GM12878 (cell line): ENCODE measurements at regions of chr3 and their contacts with region 1.

Region 1: DNA sequence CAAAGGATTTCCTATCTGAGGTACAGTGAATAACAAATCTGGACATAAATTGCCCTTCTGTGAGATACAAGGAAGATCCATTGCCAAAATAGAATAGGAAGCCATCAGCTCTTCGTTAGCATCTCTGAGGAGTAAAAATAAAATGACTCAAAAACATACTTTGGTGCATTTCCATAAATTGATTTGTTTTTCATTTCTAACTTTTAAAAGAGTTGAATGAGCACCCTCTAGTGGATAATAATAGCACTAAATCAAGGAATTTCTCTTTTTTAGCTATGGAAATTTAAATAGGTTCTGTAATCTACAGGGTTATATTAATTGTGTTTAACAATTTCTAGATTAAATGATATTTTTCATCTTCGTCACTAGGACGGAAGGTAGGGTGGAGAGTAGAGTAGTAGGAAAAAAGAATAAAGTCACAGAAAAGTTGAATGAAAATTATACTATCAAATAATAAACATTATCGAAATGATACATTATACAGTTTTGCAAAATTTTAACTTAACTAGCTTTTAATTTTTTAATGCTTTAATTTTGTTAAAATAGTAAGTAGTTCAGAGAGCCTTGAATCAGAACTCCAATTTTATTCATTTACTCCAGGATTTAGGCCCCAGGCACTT is 6.4 kb downstream of the NSUN3 start:
- DNase-seq: no peak
- ATAC-seq: no peak
- H3K4me3 ChIP-seq: no peak overlapping the region
- H3K27ac ChIP-seq: peak overlapping the region; percentile 90; the same call in 1 of the 2 replicates
- H3K4me1 ChIP-seq: peaks cover 30% of the 10 kb centered on the region
- H3K27me3 ChIP-seq: no peaks in the 10 kb centered on the region
- CTCF ChIP-seq: peak in 2 of 3 experiments; percentile 18 to 34; a peak in 4 of 6 replicates
- EP300 ChIP-seq: no peak
- POLR2A ChIP-seq: no peak
- RAD21 ChIP-seq: peak; percentile 23; the same call in 1 of the 2 replicates

Region 2: DNA sequence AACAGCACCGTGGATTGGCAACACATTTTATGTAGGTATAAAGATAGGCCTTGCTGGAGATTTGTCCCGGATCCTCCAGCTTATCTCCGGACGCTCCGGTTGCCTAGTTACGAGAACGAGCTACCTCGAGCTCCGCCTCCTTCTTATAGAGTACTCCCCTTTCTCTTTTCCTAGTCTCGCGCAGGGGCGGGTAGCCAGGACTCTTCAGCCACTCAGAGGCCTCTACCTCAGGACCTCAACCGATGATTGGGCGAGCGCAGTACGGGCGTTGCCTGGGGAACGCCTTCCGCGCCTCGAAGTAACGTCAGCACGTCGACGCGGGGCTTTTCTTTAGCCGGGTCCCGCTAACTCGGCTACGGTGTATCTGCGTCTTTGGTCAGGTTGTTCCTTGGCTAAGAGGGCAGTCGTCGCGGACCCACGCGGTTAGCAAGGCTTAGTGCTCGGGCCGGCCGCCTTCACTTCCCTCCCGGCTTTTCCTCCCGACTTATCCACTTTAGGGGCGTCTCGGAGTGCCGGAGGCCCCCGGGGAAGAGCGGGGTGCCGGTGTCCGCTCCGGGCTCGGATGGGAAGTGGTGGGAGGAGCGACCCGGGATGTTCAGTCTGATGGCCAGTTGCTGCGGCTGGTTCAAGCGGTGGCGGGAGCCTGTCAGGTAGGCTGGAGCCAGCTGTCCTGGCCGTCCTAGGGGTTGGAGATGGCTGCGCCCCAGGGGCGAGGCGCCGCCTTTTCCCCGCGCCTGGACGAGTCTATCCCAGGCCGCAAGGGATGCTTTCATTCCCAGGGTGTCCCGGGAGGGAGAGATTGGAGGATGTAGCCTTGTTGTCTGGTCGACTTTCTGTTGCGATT is 89.2 kb before region 1 on chr3 and contains the start of gene ARL13B:
- CTCF ChIA-PET with region 1: interaction called, 12 read pairs
- POLR2A ChIA-PET with region 1: no interaction called
- RAD21 ChIA-PET with region 1: interaction called, 4 read pairs
- SMC1A ChIA-PET with region 1: interaction called, 6 read pairs
- in situ Hi-C with region 1: no loop called
- intact Hi-C with region 1: no loop called
- DNase-seq: peak; percentile 90
- ATAC-seq: peak; percentile 100
- H3K4me3 ChIP-seq: peak within 1 kb of the TSS; percentile 82
- H3K27ac ChIP-seq: peak within 1 kb of the TSS; percentile 67
- H3K4me1 ChIP-seq: no peaks in the 10 kb centered on the region
- H3K27me3 ChIP-seq: no peaks in the 10 kb centered on the region
- CTCF ChIP-seq: no peak
- EP300 ChIP-seq: no peak
- POLR2A ChIP-seq: peak; percentile 88
- RAD21 ChIP-seq: no peak
- polyA plus RNA-seq, gene ARL13B: 3.0 to 4.5 TPM

Region 3: DNA sequence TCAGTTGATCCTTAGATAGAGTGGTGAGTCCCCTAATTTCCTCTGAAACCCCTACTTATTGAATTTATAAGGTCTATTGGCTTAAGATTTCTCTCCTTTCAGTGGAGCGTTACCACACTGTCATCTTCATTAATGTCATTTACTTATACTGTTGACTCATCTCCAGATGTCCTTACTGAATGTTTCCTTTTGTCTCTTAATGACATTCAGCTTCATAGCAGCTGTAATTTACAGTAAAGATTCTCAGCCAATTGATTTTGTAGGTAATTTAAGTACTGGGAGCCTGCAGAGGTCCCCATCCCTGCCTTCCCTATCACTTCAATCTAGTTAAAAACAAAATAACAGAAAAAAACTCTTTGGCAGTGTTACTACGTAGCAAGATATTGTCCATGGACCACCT is 59.7 kb before region 1 on chr3:
- CTCF ChIA-PET with region 1: interaction called, 164 read pairs
- POLR2A ChIA-PET with region 1: interaction called, 4 read pairs
- RAD21 ChIA-PET with region 1: interaction called, 21 read pairs
- SMC1A ChIA-PET with region 1: interaction called, 38 read pairs
- in situ Hi-C with region 1: loop called (anchors 5 kb)
- intact Hi-C with region 1: loop called (anchors 1 kb)
- DNase-seq: no peak
- ATAC-seq: no peak
- H3K4me3 ChIP-seq: no peak overlapping the region
- H3K27ac ChIP-seq: no peak overlapping the region
- H3K4me1 ChIP-seq: no peaks in the 10 kb centered on the region
- H3K27me3 ChIP-seq: no peaks in the 10 kb centered on the region
- CTCF ChIP-seq: no peak
- EP300 ChIP-seq: no peak
- POLR2A ChIP-seq: no peak
- RAD21 ChIP-seq: no peak

Region 4: DNA sequence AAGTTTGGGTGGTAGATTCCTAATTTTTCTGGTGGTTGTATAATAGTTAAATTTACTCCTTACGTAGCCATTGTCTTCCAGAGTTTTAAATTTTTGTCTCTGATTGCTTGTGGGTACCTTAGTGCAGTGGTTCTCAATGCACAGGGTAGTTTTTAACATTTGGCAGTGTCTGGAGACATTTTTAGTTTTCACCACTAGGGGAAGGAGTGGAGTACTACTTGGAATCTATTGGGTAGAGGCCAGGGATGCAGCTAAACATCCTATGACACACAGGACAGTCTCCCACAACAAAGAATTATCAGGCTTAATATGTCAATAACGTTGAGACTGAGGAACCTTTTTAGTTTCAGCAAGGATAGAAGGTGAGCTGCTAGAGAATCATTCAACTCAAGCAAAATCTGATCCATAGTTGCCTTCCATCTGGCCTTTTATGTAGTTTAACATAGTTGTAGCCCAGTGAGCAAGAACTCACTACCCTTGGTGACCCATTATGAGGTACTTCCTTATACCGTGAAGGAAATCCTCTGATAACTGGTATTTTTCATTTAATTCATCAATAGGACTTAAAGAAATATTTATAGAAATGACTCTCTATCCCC is 32.3 kb before region 1 on chr3:
- CTCF ChIA-PET with region 1: interaction called, 31 read pairs
- POLR2A ChIA-PET with region 1: no interaction called
- RAD21 ChIA-PET with region 1: interaction called, 12 read pairs
- SMC1A ChIA-PET with region 1: interaction called, 4 read pairs
- in situ Hi-C with region 1: no loop called
- intact Hi-C with region 1: no loop called
- DNase-seq: no peak
- ATAC-seq: peak; percentile 92
- H3K4me3 ChIP-seq: no peak overlapping the region
- H3K27ac ChIP-seq: no peak overlapping the region
- H3K4me1 ChIP-seq: no peaks in the 10 kb centered on the region
- H3K27me3 ChIP-seq: no peaks in the 10 kb centered on the region
- CTCF ChIP-seq: peak; percentile 43 to 59 (median 50)
- EP300 ChIP-seq: no peak
- POLR2A ChIP-seq: no peak
- RAD21 ChIP-seq: 0 out of 2 replicates have a peak, but pooled peaks have one; percentile 15

Region 5: DNA sequence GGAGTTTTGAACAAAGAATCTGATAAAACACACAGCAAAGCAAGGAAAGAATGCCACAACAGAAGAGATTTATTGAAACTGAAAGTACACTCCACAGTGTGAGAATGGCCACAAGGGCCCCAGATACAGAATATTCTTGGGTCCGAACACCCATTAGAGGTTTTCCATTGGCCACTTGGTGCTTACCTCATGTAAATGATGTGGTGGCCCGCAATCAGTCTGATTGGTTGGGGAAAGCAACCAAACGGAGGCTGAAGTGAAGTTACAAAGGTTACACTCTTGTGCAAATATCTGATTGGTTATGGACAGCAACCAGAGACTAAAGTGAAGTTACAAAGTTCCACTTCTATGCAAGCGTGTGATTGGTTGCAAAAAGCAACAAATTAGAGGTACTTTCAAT is 14.0 kb after region 1 on chr3:
- CTCF ChIA-PET with region 1: interaction called, 15 read pairs
- POLR2A ChIA-PET with region 1: interaction called, 6 read pairs
- RAD21 ChIA-PET with region 1: interaction called, 5 read pairs
- SMC1A ChIA-PET with region 1: interaction called, 8 read pairs
- in situ Hi-C with region 1: no loop called
- intact Hi-C with region 1: no loop called
- DNase-seq: no peak
- ATAC-seq: peak; percentile 92
- H3K4me3 ChIP-seq: no peak overlapping the region
- H3K27ac ChIP-seq: no peak overlapping the region
- H3K4me1 ChIP-seq: no peaks in the 10 kb centered on the region; the same call in 1 of the 2 replicates
- H3K27me3 ChIP-seq: no peaks in the 10 kb centered on the region
- CTCF ChIP-seq: no peak
- EP300 ChIP-seq: no peak
- POLR2A ChIP-seq: no peak
- RAD21 ChIP-seq: no peak

Region 6: GRCh38 chr3:94150113-94150512 is 80.8 kb after region 1 on chr3:
- CTCF ChIA-PET with region 1: no interaction called
- POLR2A ChIA-PET with region 1: no interaction called
- RAD21 ChIA-PET with region 1: no interaction called
- SMC1A ChIA-PET with region 1: no interaction called
- in situ Hi-C with region 1: no loop called
- intact Hi-C with region 1: no loop called
- DNase-seq: no peak
- ATAC-seq: no peak
- H3K4me3 ChIP-seq: no peak overlapping the region
- H3K27ac ChIP-seq: no peak overlapping the region
- H3K4me1 ChIP-seq: no peaks in the 10 kb centered on the region
- H3K27me3 ChIP-seq: no peaks in the 10 kb centered on the region
- CTCF ChIP-seq: no peak
- EP300 ChIP-seq: no peak
- POLR2A ChIP-seq: no peak
- RAD21 ChIP-seq: no peak

Region 7: DNA sequence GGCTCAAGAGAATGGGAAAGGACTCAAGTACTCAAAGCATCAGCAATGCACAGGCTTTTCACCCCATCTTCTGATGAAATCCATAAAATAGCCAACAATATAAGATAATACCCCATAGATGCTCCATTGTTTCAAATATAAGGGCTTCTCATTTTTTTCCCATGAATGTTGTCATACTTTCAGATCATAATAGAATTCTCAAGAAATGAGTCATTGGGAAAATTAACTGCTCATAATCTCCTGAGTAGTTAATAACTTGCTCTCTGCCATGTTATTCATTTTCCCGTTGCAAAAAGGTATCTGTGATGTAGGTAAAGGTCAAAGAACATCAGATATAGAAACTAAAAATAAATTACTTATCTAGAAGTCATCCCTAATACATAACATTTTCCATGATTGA is 115.5 kb after region 1 on chr3:
- CTCF ChIA-PET with region 1: no interaction called
- POLR2A ChIA-PET with region 1: no interaction called
- RAD21 ChIA-PET with region 1: no interaction called
- SMC1A ChIA-PET with region 1: no interaction called
- in situ Hi-C with region 1: no loop called
- intact Hi-C with region 1: no loop called
- DNase-seq: no peak
- ATAC-seq: no peak; the same call in 2 of the 3 replicates
- H3K4me3 ChIP-seq: no peak overlapping the region
- H3K27ac ChIP-seq: no peak overlapping the region
- H3K4me1 ChIP-seq: no peaks in the 10 kb centered on the region
- H3K27me3 ChIP-seq: no peaks in the 10 kb centered on the region
- CTCF ChIP-seq: no peak
- EP300 ChIP-seq: no peak
- POLR2A ChIP-seq: no peak
- RAD21 ChIP-seq: no peak

Region 8: DNA sequence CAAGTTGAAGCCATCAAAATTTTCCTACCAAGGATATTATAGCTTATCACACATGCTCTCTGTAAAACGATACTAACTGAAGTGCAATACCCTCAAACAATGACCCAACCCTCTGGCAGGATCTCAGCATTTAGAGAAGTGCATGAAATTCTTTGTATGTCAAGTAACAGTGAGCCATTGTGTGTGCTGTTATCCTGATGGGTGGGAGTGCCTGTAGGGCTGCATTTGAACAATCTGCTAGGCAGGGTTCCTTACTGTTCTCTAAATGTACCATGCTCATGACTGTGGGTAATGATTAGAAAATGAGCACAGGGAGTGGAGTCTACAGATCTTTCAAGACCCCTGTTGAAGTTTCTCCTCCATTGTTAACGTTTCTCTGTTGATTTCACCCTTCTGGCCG is 391.6 kb after region 1 on chr3:
- CTCF ChIA-PET with region 1: no interaction called
- POLR2A ChIA-PET with region 1: no interaction called
- RAD21 ChIA-PET with region 1: no interaction called
- SMC1A ChIA-PET with region 1: no interaction called
- in situ Hi-C with region 1: no loop called
- intact Hi-C with region 1: no loop called
- DNase-seq: no peak
- ATAC-seq: no peak
- H3K4me3 ChIP-seq: no peak overlapping the region
- H3K27ac ChIP-seq: no peak overlapping the region
- H3K4me1 ChIP-seq: no peaks in the 10 kb centered on the region
- H3K27me3 ChIP-seq: no peaks in the 10 kb centered on the region
- CTCF ChIP-seq: no peak
- EP300 ChIP-seq: no peak
- POLR2A ChIP-seq: no peak
- RAD21 ChIP-seq: no peak